ENCODE measurements at regions of chr7 and their contacts with region 1.

Region 1: GRCh38 chr7:105173586-105173985 is 159.6 kb downstream of the KMT2E start:
- DNase-seq: no peak
- H3K4me3 Mint-ChIP-seq: no peak overlapping the region
- H3K27ac Mint-ChIP-seq: no peak overlapping the region
- H3K4me1 Mint-ChIP-seq: no peaks in the 10 kb centered on the region
- H3K27me3 Mint-ChIP-seq: no peaks in the 10 kb centered on the region

Region 2: GRCh38 chr7:105187302-105188169 is 13.9 kb after region 1 on chr7:
- intact Hi-C with region 1: loop called (anchors 1 kb)
- DNase-seq: no peak
- H3K4me3 Mint-ChIP-seq: no peak overlapping the region
- H3K27ac Mint-ChIP-seq: no peak overlapping the region
- H3K4me1 Mint-ChIP-seq: peaks cover 1% of the 10 kb centered on the region
- H3K27me3 Mint-ChIP-seq: no peaks in the 10 kb centered on the region

Measured in activated T-helper 2 cell treated with anti-CD3 and anti-CD28 coated beads, Interferon-gamma antibody, Interleukin-2, Interleukin-4, amounts not matched to agents 10 μg/mL and 5 μg/mL and 100 μg/mL, durations not matched to agents 14 hours and 24 hours and 36 hours (primary cell).